Mammary epithelial cell (primary cell): ENCODE measurements at regions of chr22 and their contacts with region 1.

Region 1: GRCh38 chr22:18954990-18955571 is 19.0 kb upstream of the PRODH start:
- DNase-seq: no peak
- H3K4me3 ChIP-seq: no peak overlapping the region
- H3K27ac ChIP-seq: no peak overlapping the region
- H3K4me1 ChIP-seq: no peaks in the 10 kb centered on the region
- H3K27me3 ChIP-seq: no peaks in the 10 kb centered on the region
- CTCF ChIP-seq: no peak

Region 2: DNA sequence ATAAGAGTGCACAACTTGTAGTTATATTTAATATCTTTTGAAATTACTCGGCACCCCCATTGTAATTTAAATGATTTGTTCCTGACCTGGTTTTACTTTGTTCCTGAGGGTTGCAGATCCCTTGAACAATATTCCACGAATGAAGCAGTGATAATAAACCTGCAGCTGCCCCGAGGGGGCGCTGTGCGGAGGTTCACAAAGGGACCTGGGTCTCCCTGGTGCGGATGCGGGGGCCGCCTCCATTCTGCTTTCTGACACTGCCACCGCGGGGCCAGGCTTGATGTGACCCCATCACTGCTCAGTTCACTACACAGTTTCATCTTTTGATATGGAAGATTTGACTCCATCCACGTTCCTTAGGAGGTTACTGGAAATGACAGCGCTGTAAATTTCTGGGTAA is 43.9 kb after region 1 on chr22:
- CTCF ChIA-PET with region 1: no interaction called
- dilution Hi-C with region 1: no loop called
- in situ Hi-C with region 1: no loop called
- intact Hi-C with region 1: no loop called
- DNase-seq: no peak
- H3K4me3 ChIP-seq: no peak overlapping the region
- H3K27ac ChIP-seq: no peak overlapping the region
- H3K4me1 ChIP-seq: no peaks in the 10 kb centered on the region
- H3K27me3 ChIP-seq: peaks cover 4% of the 10 kb centered on the region
- CTCF ChIP-seq: peak in 1 of 2 donors; percentile 11

Region 3: DNA sequence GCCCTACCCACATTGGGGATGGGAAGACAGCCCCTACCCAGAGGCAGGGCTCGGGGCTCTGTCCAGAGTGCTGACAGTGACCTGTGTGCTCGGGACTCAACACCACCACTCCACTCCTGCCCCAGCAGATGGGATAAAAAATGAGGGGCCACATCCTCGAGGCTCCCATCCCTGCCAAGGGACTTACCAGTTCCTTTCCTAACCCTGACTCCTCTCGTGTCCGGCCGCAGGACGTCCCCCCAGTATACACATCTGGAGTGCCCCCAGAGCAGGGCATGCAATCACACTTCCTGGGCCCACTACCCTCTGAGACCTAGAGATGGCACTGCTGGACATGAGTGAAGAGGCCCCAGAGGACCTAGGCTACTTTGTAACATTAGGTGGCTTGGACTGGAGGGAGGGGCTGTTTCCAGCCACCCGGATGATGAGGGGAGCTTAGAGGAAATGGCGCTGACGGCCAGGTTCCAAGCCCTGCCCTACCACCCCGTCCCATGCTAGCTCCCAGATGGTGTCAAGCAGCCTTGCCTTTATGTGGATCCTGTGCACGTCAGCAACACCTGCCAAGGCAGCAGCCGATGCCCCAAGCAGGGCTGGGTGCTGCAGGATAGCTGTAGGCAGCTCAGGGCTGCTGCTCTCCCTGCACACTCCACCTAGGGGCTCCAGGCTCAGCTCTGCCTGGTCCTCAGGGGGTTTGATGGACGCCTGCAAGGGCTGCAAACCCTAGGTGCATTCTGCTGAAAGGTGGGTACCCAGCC is 80.6 kb after region 1 on chr22:
- CTCF ChIA-PET with region 1: no interaction called
- dilution Hi-C with region 1: no loop called
- in situ Hi-C with region 1: no loop called
- intact Hi-C with region 1: loop called (anchors 10 kb)
- DNase-seq: no peak
- H3K4me3 ChIP-seq: no peak overlapping the region
- H3K27ac ChIP-seq: no peak overlapping the region
- H3K4me1 ChIP-seq: no peaks in the 10 kb centered on the region
- H3K27me3 ChIP-seq: no peaks in the 10 kb centered on the region
- CTCF ChIP-seq: peak in 1 of 2 donors; percentile 13

Region 4: DNA sequence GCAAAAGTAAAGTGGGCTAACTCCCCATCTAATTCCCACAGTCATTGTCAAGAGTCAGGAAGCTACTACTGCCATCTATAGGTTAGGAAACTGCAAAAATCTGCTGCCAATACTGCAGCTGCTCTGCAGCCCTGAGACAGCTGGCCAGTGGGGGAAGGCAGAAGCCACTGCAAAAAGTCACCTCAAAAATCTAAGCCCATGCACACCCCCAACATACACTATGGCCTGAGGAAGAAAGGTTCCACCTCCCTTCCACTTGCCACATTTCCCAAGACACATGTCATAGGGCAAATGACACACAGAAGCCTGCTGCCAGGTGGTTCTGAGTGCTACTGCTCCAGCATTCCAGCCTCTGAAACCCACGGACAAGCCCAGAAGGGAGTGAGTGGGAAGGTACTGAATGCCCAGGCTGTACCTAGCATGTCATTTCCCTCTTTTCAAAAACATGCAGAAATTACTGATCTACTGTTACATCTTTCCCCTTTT is 130.2 kb after region 1 on chr22:
- CTCF ChIA-PET with region 1: no interaction called
- dilution Hi-C with region 1: no loop called
- in situ Hi-C with region 1: no loop called
- intact Hi-C with region 1: loop called (anchors 10 kb)
- DNase-seq: peak; percentile 16
- H3K4me3 ChIP-seq: no peak overlapping the region
- H3K27ac ChIP-seq: no peak overlapping the region
- H3K4me1 ChIP-seq: peaks cover 2% of the 10 kb centered on the region
- H3K27me3 ChIP-seq: no peaks in the 10 kb centered on the region
- CTCF ChIP-seq: peak; percentile 35 to 55

Region 5: GRCh38 chr22:19479357-19480172 is 524.5 kb after region 1 on chr22 and contains the start of gene CDC45:
- CTCF ChIA-PET with region 1: no interaction called
- dilution Hi-C with region 1: no loop called
- in situ Hi-C with region 1: no loop called
- intact Hi-C with region 1: loop called (anchors 5 kb)
- DNase-seq: peak; percentile 98
- H3K4me3 ChIP-seq: peak within 1 kb of the TSS; percentile 40 to 93 (median 91)
- H3K27ac ChIP-seq: peak within 1 kb of the TSS; percentile 100
- H3K4me1 ChIP-seq: peaks cover 30% of the 10 kb centered on the region
- H3K27me3 ChIP-seq: no peaks in the 10 kb centered on the region
- CTCF ChIP-seq: no peak
- total RNA-seq, gene CDC45: 2.2 to 31.1 TPM